Activated CD4-positive, alpha-beta T cell treated with anti-CD3 and anti-CD28 coated beads for 36 hours (primary cell): ENCODE measurements at regions of chr17 and their contacts with region 1.

Region 1: DNA sequence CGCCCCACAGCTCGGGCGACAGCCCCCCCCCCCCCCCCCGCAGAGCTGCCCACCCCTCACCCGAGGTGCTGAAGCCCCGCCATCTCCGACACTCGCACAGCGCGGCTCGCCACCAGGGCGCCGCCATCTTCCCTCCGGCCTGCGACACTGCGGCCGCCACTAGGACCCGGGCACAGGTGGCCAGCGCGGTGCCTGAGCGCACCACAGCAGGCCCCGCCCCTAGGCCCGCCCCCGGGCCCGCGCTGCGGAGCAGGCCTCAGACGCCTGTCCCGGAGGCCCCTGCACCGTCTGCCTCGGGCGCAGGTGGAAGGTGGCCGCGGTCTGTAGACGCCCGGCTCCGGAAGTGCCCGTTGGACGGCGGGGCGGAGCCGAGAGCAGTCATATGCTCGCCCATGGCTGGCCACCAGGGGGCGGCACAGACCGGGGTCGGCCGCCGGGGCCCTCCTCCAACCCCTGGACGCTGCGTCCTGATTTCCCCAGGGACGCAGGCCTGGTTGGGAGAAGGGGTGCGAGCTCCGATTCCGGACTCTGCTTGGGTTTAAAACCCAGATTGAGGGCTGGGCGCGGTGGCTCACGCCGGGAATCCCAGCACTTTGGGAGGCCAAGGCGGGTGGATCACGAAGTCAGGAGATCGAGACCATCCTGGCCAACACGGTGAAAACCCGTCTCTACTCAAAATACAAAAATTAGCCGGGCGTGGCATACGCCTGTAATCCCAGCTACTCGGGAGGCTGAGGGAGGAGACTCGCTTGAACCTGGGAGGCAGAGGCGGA is at the start of gene MRPL38:
- DNase-seq: peak; percentile 97
- ATAC-seq: peak; percentile 99
- H3K4me3 Mint-ChIP-seq: peak within 1 kb of the TSS; percentile 86
- H3K27ac Mint-ChIP-seq: peak within 1 kb of the TSS; percentile 89
- H3K4me1 Mint-ChIP-seq: peaks cover 5% of the 10 kb centered on the region
- H3K27me3 Mint-ChIP-seq: no peaks in the 10 kb centered on the region
- total RNA-seq, gene MRPL38: 98.0 to 115 TPM

Region 2: DNA sequence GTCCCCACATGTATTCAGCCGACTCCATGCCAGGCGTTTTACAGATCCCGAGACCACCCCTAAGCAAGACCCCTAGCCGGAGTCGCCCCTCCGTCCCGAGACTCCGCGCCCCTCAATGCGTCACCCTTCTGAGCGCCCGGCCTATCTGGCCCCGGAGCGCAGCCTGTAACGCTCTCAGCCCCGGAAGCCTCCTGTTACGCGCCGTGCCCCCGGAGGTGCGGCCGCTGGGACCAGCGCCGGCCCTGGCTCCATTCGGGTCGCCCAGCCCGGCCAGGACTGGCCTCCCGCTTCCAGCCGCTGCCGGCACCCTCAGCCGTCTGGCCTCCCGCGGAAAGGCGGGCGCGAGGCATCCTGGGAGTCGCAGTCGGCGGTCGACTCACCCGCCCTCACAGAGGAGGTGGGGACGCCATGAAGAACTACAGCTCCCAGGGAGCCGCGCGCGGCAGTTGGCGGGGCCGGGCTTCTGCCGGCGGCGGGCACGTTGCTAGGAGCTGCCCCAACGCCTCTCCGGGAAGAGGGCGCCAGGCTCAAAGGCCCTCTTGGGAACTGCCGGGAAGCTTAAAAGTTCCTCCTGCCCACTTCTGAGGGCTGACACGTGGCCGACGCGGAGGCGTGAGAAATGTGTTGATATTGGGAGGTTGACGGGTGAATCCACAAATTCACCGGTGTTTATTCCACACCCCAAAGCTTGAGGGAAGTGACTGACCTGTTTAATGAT is 35.9 kb after region 1 on chr17 and contains the start of gene FBF1:
- CTCF ChIA-PET with region 1: interaction called, 3 read pairs
- POLR2A ChIA-PET with region 1: no interaction called
- intact Hi-C with region 1: loop called (anchors 1 kb)
- DNase-seq: peak; percentile 94
- ATAC-seq: peak; percentile 100
- H3K4me3 Mint-ChIP-seq: peak within 1 kb of the TSS; percentile 92
- H3K27ac Mint-ChIP-seq: peak within 1 kb of the TSS; percentile 82
- H3K4me1 Mint-ChIP-seq: peaks cover 13% of the 10 kb centered on the region
- H3K27me3 Mint-ChIP-seq: no peaks in the 10 kb centered on the region
- total RNA-seq, gene FBF1: 16.2 to 18.0 TPM

Region 3: GRCh38 chr17:76005263-76006149 is 100.6 kb after region 1 on chr17:
- CTCF ChIA-PET with region 1: interaction called, 38 read pairs
- POLR2A ChIA-PET with region 1: interaction called, 4 read pairs
- intact Hi-C with region 1: loop called (anchors 1 to 5 kb)
- DNase-seq: peak; percentile 92
- ATAC-seq: peak; percentile 77
- H3K4me3 Mint-ChIP-seq: no peak overlapping the region
- H3K27ac Mint-ChIP-seq: no peak overlapping the region
- H3K4me1 Mint-ChIP-seq: no peaks in the 10 kb centered on the region
- H3K27me3 Mint-ChIP-seq: no peaks in the 10 kb centered on the region

Region 4: DNA sequence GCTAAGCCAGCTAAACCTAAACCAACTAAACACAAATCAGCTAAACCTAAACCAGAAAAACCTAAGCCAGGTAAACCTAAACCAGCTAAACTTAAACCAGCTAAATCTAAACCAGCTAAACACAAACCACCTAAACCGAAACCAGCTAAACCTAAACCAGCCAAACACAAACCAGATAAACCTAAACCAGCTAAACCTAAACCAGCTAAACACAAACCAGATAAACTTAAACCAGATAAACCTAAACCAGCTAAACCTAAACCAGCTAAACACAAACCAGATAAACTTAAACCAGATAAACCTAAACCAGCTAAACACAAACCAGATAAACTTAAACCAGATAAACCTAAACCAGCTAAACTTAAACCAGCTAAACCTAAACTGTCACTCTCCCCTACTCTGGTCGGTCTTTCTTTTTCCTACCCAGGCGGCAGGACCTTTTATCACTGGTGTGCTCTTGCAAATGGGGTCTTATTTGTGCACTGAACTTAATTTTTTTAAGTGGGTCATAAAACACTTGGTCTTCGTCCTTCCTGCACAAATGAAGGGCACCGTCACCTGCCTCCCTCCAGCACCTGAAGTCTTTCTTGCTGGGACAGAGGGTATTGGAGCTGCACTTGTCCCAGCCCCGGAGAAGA is 115.0 kb after region 1 on chr17:
- CTCF ChIA-PET with region 1: no interaction called
- POLR2A ChIA-PET with region 1: no interaction called
- intact Hi-C with region 1: no loop called
- DNase-seq: no peak
- ATAC-seq: no peak
- H3K4me3 Mint-ChIP-seq: no peak overlapping the region
- H3K27ac Mint-ChIP-seq: no peak overlapping the region
- H3K4me1 Mint-ChIP-seq: no peaks in the 10 kb centered on the region
- H3K27me3 Mint-ChIP-seq: no peaks in the 10 kb centered on the region

Region 5: DNA sequence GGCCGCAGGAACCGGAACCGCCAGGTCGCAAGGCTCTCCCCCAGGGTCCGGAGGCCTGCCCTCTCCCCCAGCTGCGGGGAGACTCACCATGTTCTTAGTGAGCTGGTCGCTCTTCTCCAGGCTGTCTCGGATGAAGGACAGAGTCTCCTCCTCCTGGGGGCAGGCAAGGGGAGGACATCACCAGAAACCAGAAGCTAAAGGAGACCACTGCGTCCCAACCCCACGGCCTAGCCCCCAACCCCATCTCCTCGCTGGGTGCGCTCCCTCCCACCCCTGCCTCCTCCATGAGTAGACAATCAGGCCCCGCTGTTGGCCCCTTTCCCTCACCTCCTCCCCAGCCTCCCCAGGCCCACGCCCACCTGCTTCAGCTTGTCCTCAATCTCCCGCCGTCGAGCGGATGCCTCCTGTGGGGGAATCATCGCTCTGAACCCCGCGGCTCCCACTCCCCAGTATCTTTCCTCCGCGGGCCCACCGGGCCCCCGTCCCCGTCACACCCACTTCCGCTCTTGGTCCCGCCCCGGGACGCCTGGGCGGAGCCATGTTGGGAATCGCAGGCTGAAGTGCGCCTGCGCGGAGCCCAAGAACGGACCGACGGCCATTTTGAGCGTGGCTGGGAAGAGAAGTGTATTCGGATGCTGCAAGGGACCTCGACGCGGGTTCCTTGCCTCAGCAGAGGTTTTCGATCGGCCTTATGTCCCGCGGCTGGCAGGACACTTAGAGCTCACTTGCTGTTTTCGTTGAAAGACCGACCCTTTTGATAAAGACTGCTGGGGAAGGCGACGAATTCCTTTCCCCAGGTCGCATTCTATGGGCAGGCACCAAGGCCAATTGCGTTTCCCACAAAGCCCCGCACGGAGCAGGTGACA is 198.6 kb after region 1 on chr17 and contains the start of gene EXOC7:
- CTCF ChIA-PET with region 1: no interaction called
- POLR2A ChIA-PET with region 1: no interaction called
- intact Hi-C with region 1: loop called in 1 of 2 experiments (anchors 1 kb)
- DNase-seq: peak; percentile 96
- ATAC-seq: peak; percentile 94
- H3K4me3 Mint-ChIP-seq: peak within 1 kb of the TSS; percentile 90
- H3K27ac Mint-ChIP-seq: peak within 1 kb of the TSS; percentile 93
- H3K4me1 Mint-ChIP-seq: peaks cover 18% of the 10 kb centered on the region
- H3K27me3 Mint-ChIP-seq: no peaks in the 10 kb centered on the region
- total RNA-seq, gene EXOC7: 73.0 to 77.0 TPM

Region 6: GRCh38 chr17:76155988-76156661 is 251.2 kb after region 1 on chr17:
- CTCF ChIA-PET with region 1: no interaction called
- POLR2A ChIA-PET with region 1: no interaction called
- intact Hi-C with region 1: no loop called
- DNase-seq: no peak
- ATAC-seq: no peak
- H3K4me3 Mint-ChIP-seq: no peak overlapping the region
- H3K27ac Mint-ChIP-seq: no peak overlapping the region
- H3K4me1 Mint-ChIP-seq: peaks cover 31% of the 10 kb centered on the region
- H3K27me3 Mint-ChIP-seq: no peaks in the 10 kb centered on the region

Region 7: DNA sequence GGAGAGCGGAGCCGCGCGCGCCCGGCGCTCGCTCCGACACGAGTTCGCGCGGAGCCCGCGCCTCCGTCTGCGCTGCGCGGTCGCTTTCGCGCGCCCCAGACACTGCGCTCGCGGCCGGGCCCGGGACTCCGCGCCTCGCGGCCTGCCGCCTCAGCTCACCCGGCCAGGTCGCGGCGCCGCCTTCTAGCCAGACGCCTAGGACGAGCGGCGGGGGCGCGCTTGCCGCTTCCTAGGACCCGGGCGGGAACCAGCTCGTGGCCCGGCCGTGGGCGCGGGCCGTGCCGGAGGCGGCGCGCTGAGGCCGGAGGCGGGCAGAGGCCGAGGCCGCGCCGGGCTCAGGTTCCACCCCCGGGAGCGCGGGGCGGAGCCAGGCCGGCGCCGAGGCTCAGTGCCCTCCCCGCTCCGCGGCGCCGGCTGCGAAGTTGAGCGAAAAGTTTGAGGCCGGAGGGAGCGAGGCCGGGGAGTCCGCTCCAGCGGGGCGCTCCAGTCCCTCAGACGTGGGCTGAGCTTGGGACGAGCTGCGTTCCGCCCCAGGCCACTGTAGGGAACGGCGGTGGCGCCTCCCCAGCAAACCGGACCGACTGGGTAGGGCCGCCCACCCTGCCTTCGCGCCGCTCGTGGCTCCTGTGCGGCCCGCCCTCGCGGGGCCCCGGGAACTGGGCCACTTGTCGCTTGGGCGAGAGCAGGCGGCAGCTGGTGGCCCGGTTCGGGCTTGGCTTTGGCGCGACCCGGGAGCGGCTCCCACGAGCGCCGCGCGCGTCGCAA is 479.5 kb after region 1 on chr17 and contains the start of gene SPHK1:
- CTCF ChIA-PET with region 1: no interaction called
- POLR2A ChIA-PET with region 1: no interaction called
- intact Hi-C with region 1: loop called in 1 of 2 experiments (anchors 2 kb)
- DNase-seq: peak; percentile 86
- ATAC-seq: peak; percentile 72
- H3K4me3 Mint-ChIP-seq: peak within 1 kb of the TSS; percentile 85
- H3K27ac Mint-ChIP-seq: peak within 1 kb of the TSS; percentile 81
- H3K4me1 Mint-ChIP-seq: peaks cover 12% of the 10 kb centered on the region
- H3K27me3 Mint-ChIP-seq: no peaks in the 10 kb centered on the region
- total RNA-seq, gene SPHK1: 7.4 to 11.7 TPM

Region 8: GRCh38 chr17:76452660-76453430 is 547.9 kb after region 1 on chr17 and contains the start of gene UBE2O:
- CTCF ChIA-PET with region 1: no interaction called
- POLR2A ChIA-PET with region 1: no interaction called
- intact Hi-C with region 1: no loop called
- DNase-seq: peak; percentile 96
- ATAC-seq: peak; percentile 96
- H3K4me3 Mint-ChIP-seq: peak within 1 kb of the TSS; percentile 84
- H3K27ac Mint-ChIP-seq: peak within 1 kb of the TSS; percentile 55
- H3K4me1 Mint-ChIP-seq: peaks cover 36% of the 10 kb centered on the region
- H3K27me3 Mint-ChIP-seq: no peaks in the 10 kb centered on the region
- total RNA-seq, gene UBE2O: 28.1 to 30.7 TPM